ENCODE measurements at regions of chr2 and their contacts with region 1.

Region 1: GRCh38 chr2:237674731-237675276 is 47.4 kb downstream of the LRRFIP1 start:
- DNase-seq: peak; percentile 77
- ATAC-seq: peak; percentile 92
- H3K4me3 ChIP-seq: peak overlapping the region; percentile 10; the same call in 1 of the 2 replicates
- H3K27ac ChIP-seq: peak overlapping the region; percentile 62
- H3K4me1 ChIP-seq: peaks cover 52% of the 10 kb centered on the region
- H3K27me3 ChIP-seq: no peaks in the 10 kb centered on the region
- CTCF ChIP-seq: no peak
- EP300 ChIP-seq: peak; percentile 56 to 67; a peak in 3 of 4 replicates
- POLR2A ChIP-seq: no peak
- RAD21 ChIP-seq: no peak

Region 2: GRCh38 chr2:237685408-237685807 is 10.6 kb after region 1 on chr2:
- CTCF ChIA-PET with region 1: interaction called, 298 read pairs
- POLR2A ChIA-PET with region 1: interaction called, 21 read pairs
- RAD21 ChIA-PET with region 1: interaction called, 209 read pairs
- SMC1A ChIA-PET with region 1: interaction called, 66 read pairs
- in situ Hi-C with region 1: no loop called
- intact Hi-C with region 1: loop called (anchors 1 kb)
- DNase-seq: no peak
- ATAC-seq: no peak
- H3K4me3 ChIP-seq: no peak overlapping the region
- H3K27ac ChIP-seq: no peak overlapping the region
- H3K4me1 ChIP-seq: peaks cover 15% of the 10 kb centered on the region
- H3K27me3 ChIP-seq: no peaks in the 10 kb centered on the region
- CTCF ChIP-seq: peak in 1 of 3 experiments; percentile 6; a peak in 1 of 6 replicates
- EP300 ChIP-seq: no peak
- POLR2A ChIP-seq: no peak
- RAD21 ChIP-seq: no peak

Region 3: DNA sequence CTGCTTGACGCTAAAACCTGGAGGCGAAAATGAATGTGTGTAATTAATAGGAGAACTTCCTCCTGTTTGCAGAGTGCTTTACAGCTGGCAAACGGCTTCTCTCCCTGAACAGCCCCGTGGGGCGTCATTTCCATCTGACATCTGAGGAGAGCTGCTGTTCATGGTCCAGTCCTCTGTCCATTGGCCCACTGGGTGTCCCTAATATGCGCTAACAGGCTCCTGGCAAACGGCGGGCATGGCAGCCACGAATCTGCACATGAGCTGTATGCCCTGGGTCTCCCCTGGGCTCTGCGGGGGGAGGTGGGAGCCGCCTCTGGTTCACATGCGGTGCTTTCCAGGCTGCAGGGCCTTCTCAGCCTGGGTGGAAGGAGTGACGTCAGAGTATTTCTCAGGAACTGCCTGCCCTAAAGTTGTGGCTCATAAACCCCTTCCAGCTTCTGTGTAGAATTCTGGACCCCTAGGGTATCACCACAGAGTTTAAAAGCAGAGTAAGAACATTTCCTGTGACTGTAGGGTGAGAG is 25.8 kb after region 1 on chr2:
- CTCF ChIA-PET with region 1: interaction called, 298 read pairs
- POLR2A ChIA-PET with region 1: interaction called, 23 read pairs
- RAD21 ChIA-PET with region 1: interaction called, 209 read pairs
- SMC1A ChIA-PET with region 1: interaction called, 155 read pairs
- in situ Hi-C with region 1: no loop called
- intact Hi-C with region 1: no loop called
- DNase-seq: peak; percentile 54
- ATAC-seq: peak; percentile 68
- H3K4me3 ChIP-seq: peak overlapping the region; percentile 56
- H3K27ac ChIP-seq: peak overlapping the region; percentile 77
- H3K4me1 ChIP-seq: peaks cover 70% of the 10 kb centered on the region
- H3K27me3 ChIP-seq: no peaks in the 10 kb centered on the region
- CTCF ChIP-seq: no peak
- EP300 ChIP-seq: peak in 1 of 2 experiments; percentile 15; a peak in 1 of 4 replicates
- POLR2A ChIP-seq: peak; percentile 36
- RAD21 ChIP-seq: no peak

Region 4: DNA sequence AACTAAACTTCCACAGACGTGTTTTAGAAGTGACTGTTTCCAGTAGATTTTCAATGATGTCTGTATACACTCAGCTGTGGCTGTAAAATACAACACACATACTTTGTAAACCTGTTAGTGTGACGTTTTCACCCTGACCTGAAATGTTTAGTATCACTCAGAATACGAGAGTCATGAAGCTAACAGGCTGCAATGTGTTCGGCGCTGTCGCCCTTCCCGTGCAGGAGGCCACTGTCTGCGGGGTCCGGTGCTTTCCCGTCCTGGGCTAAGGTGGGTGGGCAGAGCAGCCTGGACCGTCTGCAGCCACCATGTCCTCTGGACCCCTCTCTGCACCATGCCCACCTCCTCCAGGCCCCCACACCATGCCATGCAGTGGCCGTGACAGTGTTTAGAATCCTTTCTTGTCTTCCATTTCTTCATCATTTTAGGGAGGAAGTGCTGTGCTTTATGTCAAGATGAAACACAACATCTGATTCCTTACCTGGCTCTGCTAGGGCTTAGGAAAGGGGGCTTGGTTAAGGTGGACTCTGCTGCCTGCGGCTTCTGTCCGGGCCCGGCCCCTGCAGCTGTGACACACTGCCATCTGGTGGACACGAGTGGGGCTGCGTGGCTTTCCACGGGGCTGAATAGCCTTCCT is 69.9 kb after region 1 on chr2:
- CTCF ChIA-PET with region 1: interaction called, 209 read pairs
- POLR2A ChIA-PET with region 1: interaction called, 7 read pairs
- RAD21 ChIA-PET with region 1: interaction called, 114 read pairs
- SMC1A ChIA-PET with region 1: interaction called, 151 read pairs
- in situ Hi-C with region 1: loop called (anchors 5 kb)
- intact Hi-C with region 1: loop called (anchors 1 kb)
- DNase-seq: no peak
- ATAC-seq: peak; percentile 97
- H3K4me3 ChIP-seq: no peak overlapping the region
- H3K27ac ChIP-seq: no peak overlapping the region
- H3K4me1 ChIP-seq: no peaks in the 10 kb centered on the region
- H3K27me3 ChIP-seq: no peaks in the 10 kb centered on the region
- CTCF ChIP-seq: peak; percentile 93 to 97 (median 95)
- EP300 ChIP-seq: no peak
- POLR2A ChIP-seq: peak; percentile 53
- RAD21 ChIP-seq: peak; percentile 93

Region 5: DNA sequence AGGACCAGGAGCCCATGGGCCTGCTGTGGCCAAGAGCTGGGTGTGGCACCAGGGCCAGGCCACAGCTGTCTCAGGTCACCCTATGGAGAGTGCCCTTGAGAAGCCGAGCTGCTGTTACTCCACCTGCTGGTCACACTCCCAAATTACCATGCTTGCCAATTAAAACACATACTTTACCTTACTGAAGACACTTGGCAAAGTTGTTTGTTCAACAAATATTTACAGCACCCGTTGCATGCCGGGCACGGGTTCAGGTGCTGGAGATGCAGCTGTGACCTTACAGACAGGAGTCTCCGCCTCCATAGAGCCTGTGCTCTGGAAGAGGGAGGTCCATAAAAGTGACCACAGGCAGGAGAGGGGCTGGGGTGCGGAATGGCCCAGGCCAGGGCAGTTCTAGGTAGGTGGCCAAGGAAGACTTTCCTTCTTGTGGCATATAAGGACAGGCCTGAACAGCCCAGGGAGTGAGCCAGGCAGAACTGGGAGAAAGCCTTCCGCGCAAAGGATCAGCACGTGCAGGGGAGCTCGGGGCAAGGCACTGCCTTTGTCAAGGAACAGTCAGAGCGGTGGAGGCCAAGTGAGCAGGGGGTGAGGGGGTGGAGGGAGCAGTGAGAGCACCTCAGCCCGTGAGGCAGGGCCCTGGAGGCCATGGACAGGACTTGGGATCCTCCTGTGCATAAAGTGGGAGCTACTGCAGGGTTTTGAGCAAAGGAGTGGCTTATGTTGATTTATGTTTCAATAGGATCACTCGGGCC is 100.2 kb after region 1 on chr2:
- CTCF ChIA-PET with region 1: interaction called, 34 read pairs
- POLR2A ChIA-PET with region 1: interaction called, 3 read pairs
- RAD21 ChIA-PET with region 1: interaction called, 13 read pairs
- SMC1A ChIA-PET with region 1: interaction called, 6 read pairs
- in situ Hi-C with region 1: no loop called
- intact Hi-C with region 1: no loop called
- DNase-seq: peak; percentile 11
- ATAC-seq: peak; percentile 99
- H3K4me3 ChIP-seq: no peak overlapping the region
- H3K27ac ChIP-seq: no peak overlapping the region
- H3K4me1 ChIP-seq: no peaks in the 10 kb centered on the region
- H3K27me3 ChIP-seq: no peaks in the 10 kb centered on the region
- CTCF ChIP-seq: peak; percentile 64 to 73 (median 71); a peak in 5 of 6 replicates
- EP300 ChIP-seq: no peak
- POLR2A ChIP-seq: 0 out of 2 replicates have a peak, but pooled peaks have one; percentile 33
- RAD21 ChIP-seq: peak; percentile 55